CD4-positive, alpha-beta memory T cell (primary cell): ENCODE measurements at regions of chr1 and their contacts with region 1.

Region 1: DNA sequence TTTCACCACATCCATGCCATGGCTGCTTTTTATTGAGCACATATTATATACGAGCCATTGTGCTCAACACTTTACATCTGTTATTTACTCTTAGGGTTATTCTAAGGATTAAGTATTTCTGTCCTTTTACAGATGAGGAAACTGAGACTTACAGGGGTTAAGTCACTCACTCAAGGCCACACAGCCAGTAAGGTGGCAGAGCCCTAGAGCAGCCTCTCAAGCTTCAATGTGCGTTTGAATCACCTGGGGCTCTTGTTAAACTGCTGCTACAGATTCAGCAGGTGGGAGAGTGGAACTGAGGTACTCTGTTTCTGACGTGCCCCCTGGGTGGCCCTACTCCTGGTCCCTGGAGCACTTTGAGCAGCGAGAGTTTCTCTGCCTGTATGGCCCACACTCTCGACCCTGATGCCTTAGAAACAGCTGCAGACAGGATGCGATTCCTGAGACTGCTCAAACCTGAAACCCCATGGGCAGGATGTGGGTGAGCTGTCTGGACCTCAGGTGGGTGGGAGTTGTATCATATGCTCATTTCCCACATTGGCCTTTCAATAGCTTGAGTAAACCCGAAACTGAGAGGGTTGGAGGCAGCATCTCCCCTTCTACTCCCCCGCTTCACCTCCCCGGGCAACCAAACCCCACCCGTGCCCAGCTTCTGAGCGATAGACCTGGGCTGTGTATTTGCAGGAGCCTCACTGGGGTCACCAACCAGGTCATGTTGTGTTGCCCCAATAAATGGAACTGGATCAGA is 59.3 kb downstream of the MAN1C1 start:
- DNase-seq: peak; percentile 74 to 83 (median 78)
- H3K4me3 ChIP-seq: peak overlapping the region in 1 of 2 donors; percentile 18
- H3K4me3 Mint-ChIP-seq: peak overlapping the region; percentile 74 to 89 (median 85)
- H3K27ac ChIP-seq: no peak overlapping the region
- H3K27ac Mint-ChIP-seq: peak overlapping the region; percentile 85 to 95 (median 92)
- H3K4me1 ChIP-seq: peaks cover 71% of the 10 kb centered on the region
- H3K4me1 Mint-ChIP-seq: peaks cover 66 to 88% (median 77%) of the 10 kb centered on the region in 4 donors
- H3K27me3 ChIP-seq: no peaks in the 10 kb centered on the region
- H3K27me3 Mint-ChIP-seq: no peaks in the 10 kb centered on the region

Region 2: DNA sequence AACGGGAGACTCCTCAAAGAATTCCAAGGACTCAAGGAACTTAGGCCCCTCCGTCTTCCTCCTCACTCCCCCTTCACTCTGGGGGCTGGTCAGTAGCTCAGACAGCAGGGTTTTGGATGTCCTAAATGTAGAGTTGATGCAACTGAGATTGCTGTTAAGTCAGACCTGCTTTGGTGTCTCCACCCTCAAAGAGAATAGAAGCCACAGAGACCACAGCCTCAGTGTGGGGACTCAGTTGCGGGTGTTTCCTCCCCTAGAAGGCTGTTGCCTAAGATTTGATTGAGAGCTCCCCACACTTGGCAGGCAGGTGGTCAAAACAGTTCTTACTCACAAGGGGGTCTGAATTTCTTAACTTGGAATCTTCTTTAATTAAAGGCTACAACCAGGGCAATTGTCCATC is 51.7 kb before region 1 on chr1:
- CTCF ChIA-PET with region 1: interaction called, 20 read pairs
- POLR2A ChIA-PET with region 1: interaction called, 24 read pairs
- intact Hi-C with region 1: loop called (anchors 1 kb)
- DNase-seq: peak in 3 of 5 donors; percentile 19 to 44 (median 33)
- H3K4me3 ChIP-seq: no peak overlapping the region
- H3K4me3 Mint-ChIP-seq: peak overlapping the region in 6 of 8 donors; percentile 45 to 99 (median 54)
- H3K27ac ChIP-seq: no peak overlapping the region
- H3K27ac Mint-ChIP-seq: peak overlapping the region in 4 of 7 donors; percentile 33 to 93 (median 74)
- H3K4me1 ChIP-seq: peaks cover 72% of the 10 kb centered on the region
- H3K4me1 Mint-ChIP-seq: peaks cover 71 to 92% (median 81%) of the 10 kb centered on the region in 4 donors
- H3K27me3 ChIP-seq: no peaks in the 10 kb centered on the region
- H3K27me3 Mint-ChIP-seq: no peaks in the 10 kb centered on the region